CD14-positive monocyte (primary cell): ENCODE measurements at regions of chr4 and their contacts with region 1.

Region 1: DNA sequence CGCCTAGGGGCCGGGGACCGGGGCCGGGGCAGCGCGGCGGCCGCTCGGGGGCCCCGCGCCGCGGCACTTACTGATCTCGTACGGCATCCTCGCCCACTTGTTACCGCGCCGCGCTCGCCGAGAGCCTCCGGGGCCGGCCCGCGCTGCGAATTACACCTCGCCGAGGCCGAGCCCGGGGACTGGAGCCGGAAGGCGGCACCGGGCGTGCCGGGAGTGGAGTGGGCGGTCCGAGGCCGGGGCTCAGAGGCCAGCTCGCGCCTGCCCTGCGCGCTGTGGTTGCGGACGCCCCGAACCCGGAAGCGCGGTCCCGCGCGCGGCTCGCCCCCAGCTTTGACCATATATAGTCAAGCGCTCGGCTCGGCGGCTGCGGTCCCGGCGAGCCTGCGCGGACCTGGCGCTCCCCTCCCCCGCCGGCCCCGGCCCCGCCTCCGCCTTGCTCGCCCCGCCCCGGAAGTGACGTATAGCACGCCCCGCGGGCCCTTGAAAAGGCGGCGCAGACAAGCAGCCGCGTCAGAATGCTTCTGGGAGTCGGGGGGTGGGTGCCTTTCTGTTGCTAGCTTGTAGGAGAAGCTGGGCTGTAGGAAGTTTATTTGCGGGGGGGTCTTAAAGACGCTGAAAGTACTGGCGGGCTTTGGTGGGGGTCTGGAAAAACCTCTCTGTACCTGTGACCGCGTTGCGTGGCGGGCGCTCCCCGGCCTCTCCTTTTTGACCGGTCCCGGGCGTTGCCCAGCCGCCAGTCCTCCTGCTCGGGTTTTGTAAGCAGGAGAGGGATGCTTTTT is at the start of gene WDR1:
- DNase-seq: peak; percentile 95 to 97 (median 97)
- H3K4me3 ChIP-seq: peak within 1 kb of the TSS; percentile 80 to 93 (median 85)
- H3K4me3 Mint-ChIP-seq: peak within 1 kb of the TSS; percentile 93 to 96
- H3K27ac ChIP-seq: peak within 1 kb of the TSS; percentile 85 to 99
- H3K27ac Mint-ChIP-seq: peak within 1 kb of the TSS; percentile 99 to 100 (median 100)
- H3K4me1 ChIP-seq: peaks cover 36 to 43% of the 10 kb centered on the region in 2 donors
- H3K4me1 Mint-ChIP-seq: peaks cover 53% of the 10 kb centered on the region
- H3K27me3 ChIP-seq: no peaks in the 10 kb centered on the region
- H3K27me3 Mint-ChIP-seq: peaks cover 0 to 5% (median 5%) of the 10 kb centered on the region in 3 donors
- CTCF ChIP-seq: no peak
- polyA plus RNA-seq, gene WDR1: 206 to 251 (median 243) TPM

Region 2: DNA sequence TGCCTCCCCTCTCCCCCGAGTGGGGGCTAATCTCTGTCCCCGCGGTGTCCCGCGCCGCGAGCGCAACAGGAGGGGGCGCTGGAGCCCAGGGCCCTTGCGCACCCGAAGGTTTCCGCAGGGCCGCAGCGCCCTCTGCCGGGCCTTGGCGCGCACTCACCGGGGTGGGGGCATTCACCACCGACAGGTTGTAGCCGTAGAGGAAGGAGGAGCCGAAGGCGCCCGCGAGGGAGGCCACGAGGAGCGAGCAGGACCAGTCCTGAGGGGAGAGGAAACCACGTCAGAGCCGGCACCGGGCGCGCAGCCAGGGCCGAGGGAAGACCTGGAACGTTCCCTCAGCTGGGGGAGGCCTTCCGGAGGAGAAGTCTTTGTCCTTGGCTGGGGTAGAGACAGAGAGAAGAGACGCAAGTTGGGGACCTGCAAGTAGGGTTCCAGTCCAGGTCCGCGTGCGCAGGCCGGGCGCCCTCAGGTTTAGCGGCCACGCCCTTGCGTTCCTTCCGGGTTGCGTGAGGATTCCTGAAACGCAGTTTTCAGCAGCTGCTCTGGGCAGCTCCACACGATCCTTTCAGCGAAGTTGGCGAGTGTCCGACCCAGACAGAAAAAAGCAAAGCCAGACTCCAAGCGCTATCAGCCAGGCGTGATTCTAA is 97.8 kb before region 1 on chr4:
- intact Hi-C with region 1: loop called (anchors 5 kb)
- DNase-seq: peak; percentile 96 to 97 (median 96)
- H3K4me3 ChIP-seq: peak overlapping the region; percentile 13 to 69 (median 51)
- H3K4me3 Mint-ChIP-seq: peak overlapping the region; percentile 78 to 92
- H3K27ac ChIP-seq: peak overlapping the region; percentile 95
- H3K27ac Mint-ChIP-seq: peak overlapping the region; percentile 96 to 99 (median 97)
- H3K4me1 ChIP-seq: peaks cover 58 to 63% of the 10 kb centered on the region in 2 donors
- H3K4me1 Mint-ChIP-seq: peaks cover 69% of the 10 kb centered on the region
- H3K27me3 ChIP-seq: no peaks in the 10 kb centered on the region
- H3K27me3 Mint-ChIP-seq: no peaks in the 10 kb centered on the region
- CTCF ChIP-seq: peak; percentile 100

Region 3: DNA sequence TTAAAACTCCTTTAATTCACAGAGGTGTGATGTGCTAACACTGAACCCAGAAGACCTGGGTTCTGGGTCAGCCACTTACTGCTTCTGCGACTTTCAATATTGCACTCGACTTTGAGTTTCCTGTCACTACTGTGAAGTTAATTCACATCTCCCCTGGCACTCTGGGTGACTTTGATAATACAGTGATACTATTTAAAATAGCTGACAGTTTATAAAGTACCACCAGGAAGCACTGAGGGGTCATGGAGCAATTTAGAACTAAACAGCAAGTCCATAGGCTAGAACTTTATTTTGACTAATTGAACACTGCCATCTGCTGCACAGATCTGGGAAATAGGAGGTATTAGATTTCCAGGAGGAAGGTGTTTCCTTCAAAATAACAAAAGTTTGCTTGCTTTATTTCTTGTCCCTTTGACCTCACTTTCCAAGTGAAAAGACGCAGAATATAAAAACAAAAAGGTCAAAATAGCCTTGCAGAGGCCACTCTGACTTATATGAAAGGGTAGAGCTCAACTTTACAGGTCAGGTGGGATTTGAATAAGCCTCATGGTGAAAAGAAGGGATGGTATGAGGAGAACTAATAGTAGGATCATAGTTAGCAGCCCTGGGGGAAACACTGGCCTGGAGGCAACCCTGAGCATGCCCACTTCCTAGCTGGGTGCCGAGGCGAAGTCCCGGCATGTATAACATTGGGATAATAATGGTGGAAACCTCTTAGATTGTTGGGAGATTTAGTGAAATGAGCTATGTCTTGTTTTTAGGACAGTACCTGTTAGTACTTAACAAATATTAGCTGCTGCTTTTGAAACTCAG is 287.1 kb after region 1 on chr4:
- intact Hi-C with region 1: no loop called
- DNase-seq: peak; percentile 2 to 17 (median 15)
- H3K4me3 ChIP-seq: no peak overlapping the region
- H3K4me3 Mint-ChIP-seq: no peak overlapping the region
- H3K27ac ChIP-seq: no peak overlapping the region
- H3K27ac Mint-ChIP-seq: no peak overlapping the region
- H3K4me1 ChIP-seq: no peaks in the 10 kb centered on the region
- H3K4me1 Mint-ChIP-seq: no peaks in the 10 kb centered on the region
- H3K27me3 ChIP-seq: no peaks in the 10 kb centered on the region
- H3K27me3 Mint-ChIP-seq: no peaks in the 10 kb centered on the region
- CTCF ChIP-seq: peak; percentile 16